ENCODE measurements at regions of chr4 and their contacts with region 1.

Region 1: GRCh38 chr4:118772081-118772766 is 63.7 kb downstream of the SEC24D start:
- DNase-seq: no peak
- ATAC-seq: peak; percentile 76
- H3K4me3 Mint-ChIP-seq: no peak overlapping the region
- H3K27ac Mint-ChIP-seq: no peak overlapping the region
- H3K4me1 Mint-ChIP-seq: no peaks in the 10 kb centered on the region
- H3K27me3 Mint-ChIP-seq: no peaks in the 10 kb centered on the region

Region 2: DNA sequence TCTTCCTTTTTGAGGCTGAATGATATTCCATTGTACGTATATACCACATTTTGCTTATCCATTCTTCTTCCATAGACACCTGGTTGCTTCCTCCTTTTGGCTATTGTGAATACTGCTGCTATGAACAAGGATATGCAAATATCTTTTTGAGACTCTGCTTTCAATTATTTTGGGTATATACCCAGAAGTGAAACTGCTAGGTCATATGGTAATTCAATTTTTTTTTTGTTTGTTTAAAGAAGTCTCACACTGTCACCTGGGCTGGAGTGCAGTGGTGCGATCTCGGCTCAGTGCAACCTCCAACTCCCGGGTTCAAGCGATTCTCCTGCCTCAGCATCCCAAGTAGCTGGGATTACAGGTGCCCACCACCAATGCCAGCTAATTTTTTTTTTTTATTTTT is 11.7 kb before region 1 on chr4:
- CTCF ChIA-PET with region 1: interaction called, 11 read pairs
- POLR2A ChIA-PET with region 1: no interaction called
- DNase-seq: no peak
- ATAC-seq: no peak
- H3K4me3 Mint-ChIP-seq: no peak overlapping the region
- H3K27ac Mint-ChIP-seq: no peak overlapping the region
- H3K4me1 Mint-ChIP-seq: no peaks in the 10 kb centered on the region
- H3K27me3 Mint-ChIP-seq: no peaks in the 10 kb centered on the region

Region 3: DNA sequence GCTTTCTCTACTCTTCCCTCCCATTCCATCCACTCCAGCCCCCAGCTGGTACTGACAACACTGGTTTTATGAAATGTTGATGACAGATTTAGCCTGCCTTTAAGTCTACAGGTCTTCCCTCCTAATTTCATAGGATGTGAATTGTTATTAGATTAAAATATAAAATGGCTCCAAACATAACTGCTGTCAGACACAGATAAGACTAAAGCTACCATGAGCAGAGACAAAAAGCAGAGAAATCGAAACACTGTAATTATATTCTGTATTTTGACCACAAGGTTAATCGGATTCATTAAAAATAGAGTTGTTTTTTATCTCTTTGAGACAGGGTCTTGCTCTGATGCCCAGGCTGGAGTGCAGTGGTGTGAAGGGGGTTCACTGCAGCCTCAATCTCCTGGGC is 35.4 kb after region 1 on chr4:
- CTCF ChIA-PET with region 1: no interaction called
- POLR2A ChIA-PET with region 1: no interaction called
- DNase-seq: no peak
- ATAC-seq: no peak
- H3K4me3 Mint-ChIP-seq: no peak overlapping the region
- H3K27ac Mint-ChIP-seq: no peak overlapping the region
- H3K4me1 Mint-ChIP-seq: no peaks in the 10 kb centered on the region
- H3K27me3 Mint-ChIP-seq: no peaks in the 10 kb centered on the region

Region 4: DNA sequence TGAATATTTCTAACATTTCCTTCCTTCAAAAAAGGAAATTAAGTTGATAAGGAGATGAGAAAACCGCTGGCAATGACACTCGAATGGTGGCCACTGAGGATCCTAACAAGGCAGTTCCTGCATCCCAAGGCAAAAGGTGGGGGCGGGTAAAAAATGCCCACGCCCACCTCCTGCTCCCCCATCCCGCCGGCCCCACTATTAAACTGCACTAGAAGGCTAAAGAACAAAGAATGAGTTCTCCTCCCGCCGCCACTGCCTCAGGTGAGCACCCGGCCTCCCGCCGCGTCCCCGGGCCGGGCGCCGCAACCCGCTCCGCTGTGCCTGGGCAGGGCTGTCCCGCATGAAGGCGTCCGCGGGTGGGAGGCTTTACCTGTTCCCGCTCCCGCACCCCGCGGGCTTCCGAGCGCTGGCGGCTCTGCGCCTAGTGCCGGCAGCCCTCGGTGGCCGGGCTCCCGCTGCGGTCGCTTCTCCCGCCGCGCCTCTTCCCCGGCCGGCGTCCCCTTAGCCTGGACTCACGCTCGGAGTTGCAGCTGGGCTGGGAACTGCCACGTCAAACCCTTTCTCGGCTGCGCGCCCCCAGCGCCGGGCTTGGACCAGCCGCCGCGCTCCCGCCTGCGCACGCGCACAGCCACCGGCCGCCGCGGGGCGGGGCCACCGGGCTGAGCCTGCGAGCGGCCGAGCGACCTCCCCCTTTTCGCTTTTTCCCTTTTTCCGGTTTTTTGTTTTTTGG is 63.5 kb after region 1 on chr4 and contains the start of gene SEC24D:
- CTCF ChIA-PET with region 1: interaction called, 25 read pairs
- POLR2A ChIA-PET with region 1: no interaction called
- DNase-seq: peak; percentile 84
- ATAC-seq: peak; percentile 88
- H3K4me3 Mint-ChIP-seq: peak within 1 kb of the TSS; percentile 94
- H3K27ac Mint-ChIP-seq: peak within 1 kb of the TSS; percentile 95
- H3K4me1 Mint-ChIP-seq: peaks cover 24% of the 10 kb centered on the region
- H3K27me3 Mint-ChIP-seq: peaks cover 4% of the 10 kb centered on the region
- total RNA-seq, gene SEC24D: 29.5 to 32.7 TPM

Region 5: DNA sequence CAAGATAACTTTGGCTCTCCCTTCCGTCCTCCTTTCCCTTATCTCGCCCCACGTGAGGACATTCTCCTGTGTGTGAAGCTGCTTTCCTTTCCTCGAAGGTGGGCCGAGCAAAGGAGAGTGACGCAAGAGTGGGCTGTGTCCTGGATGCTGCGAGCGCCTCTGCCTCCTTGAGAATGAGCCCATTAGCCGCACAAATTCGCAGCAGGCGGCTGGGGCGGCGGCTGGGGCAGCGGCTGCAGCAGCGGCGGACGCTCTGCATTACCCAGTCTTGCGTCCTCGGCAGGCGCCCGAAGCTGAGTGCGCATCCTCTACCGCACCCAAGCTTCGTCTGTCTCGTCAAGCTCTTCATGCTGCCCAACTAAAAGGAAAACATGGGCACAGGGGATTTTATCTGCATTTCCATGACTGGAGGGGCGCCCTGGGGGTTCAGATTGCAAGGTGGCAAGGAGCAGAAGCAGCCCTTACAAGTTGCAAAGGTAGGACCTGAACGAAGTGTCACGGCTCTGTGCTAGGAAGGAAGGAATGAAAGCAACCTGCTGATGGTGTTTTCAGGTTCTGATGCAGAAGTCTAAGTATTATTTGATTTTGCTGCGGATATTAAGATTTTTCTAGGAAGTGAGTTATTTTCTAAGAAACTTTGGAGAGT is 116.6 kb after region 1 on chr4 and contains the start of gene SYNPO2:
- CTCF ChIA-PET with region 1: interaction called, 19 read pairs
- POLR2A ChIA-PET with region 1: no interaction called
- DNase-seq: peak; percentile 56
- ATAC-seq: peak; percentile 92
- H3K4me3 Mint-ChIP-seq: peak within 1 kb of the TSS; percentile 73
- H3K27ac Mint-ChIP-seq: no peak within 1 kb of the TSS
- H3K4me1 Mint-ChIP-seq: peaks cover 14% of the 10 kb centered on the region
- H3K27me3 Mint-ChIP-seq: peaks cover 43% of the 10 kb centered on the region
- total RNA-seq, gene SYNPO2: 0.60 to 0.74 TPM

Region 6: GRCh38 chr4:118969359-118969758 is 197.1 kb after region 1 on chr4:
- CTCF ChIA-PET with region 1: no interaction called
- POLR2A ChIA-PET with region 1: no interaction called
- DNase-seq: no peak
- ATAC-seq: no peak
- H3K4me3 Mint-ChIP-seq: no peak overlapping the region
- H3K27ac Mint-ChIP-seq: no peak overlapping the region
- H3K4me1 Mint-ChIP-seq: peaks cover 12% of the 10 kb centered on the region
- H3K27me3 Mint-ChIP-seq: no peaks in the 10 kb centered on the region

Measured in activated CD8-positive, alpha-beta T cell treated with anti-CD3 and anti-CD28 coated beads, Interleukin-2, amount 10 ng/mL, durations not matched to agents 7 days and 5 days (primary cell).